Heart right ventricle (tissue), 16 donors: ENCODE measurements at regions of chr19 and their contacts with region 1.

Region 1: GRCh38 chr19:17859533-17860330 is at the start of gene RPL18A:
- DNase-seq: peak; percentile 98 to 99
- ATAC-seq: peak; percentile 96 to 99 (median 98)
- H3K4me3 ChIP-seq: peak within 1 kb of the TSS; percentile 75 to 99 (median 92)
- H3K27ac ChIP-seq: peak within 1 kb of the TSS; percentile 76 to 96 (median 90)
- H3K4me1 ChIP-seq: peaks cover 9 to 33% (median 23%) of the 10 kb centered on the region in 9 donors
- H3K27me3 ChIP-seq: no peaks in the 10 kb centered on the region
- CTCF ChIP-seq: peak; percentile 42 to 91 (median 77)
- total RNA-seq, gene RPL18A: 623 to 1,142 (median 682) TPM

Region 2: GRCh38 chr19:17448131-17448967 is 411.4 kb before region 1 on chr19 and contains the start of gene TMEM221:
- intact Hi-C with region 1: loop called in 3 of 10 experiments (anchors 5 to 10 kb)
- DNase-seq: peak; percentile 42 to 61
- ATAC-seq: peak; percentile 64 to 85 (median 76)
- H3K4me3 ChIP-seq: peak within 1 kb of the TSS in 9 of 10 donors; percentile 33 to 60 (median 49)
- H3K27ac ChIP-seq: no peak within 1 kb of the TSS
- H3K4me1 ChIP-seq: peaks cover 0 to 10% (median 7%) of the 10 kb centered on the region in 9 donors
- H3K27me3 ChIP-seq: peaks cover 0 to 36% (median 3%) of the 10 kb centered on the region in 7 donors
- CTCF ChIP-seq: peak; percentile 21 to 75 (median 63)
- total RNA-seq, gene TMEM221: 0.12 to 0.20 TPM in 2 of 10 donors, not detected in the others

Region 3: GRCh38 chr19:17703824-17704463 is 155.8 kb before region 1 on chr19:
- intact Hi-C with region 1: loop called in 8 of 10 experiments (anchors 5 to 10 kb)
- DNase-seq: peak in 1 of 2 donors; percentile 55
- ATAC-seq: peak; percentile 58 to 85 (median 74)
- H3K4me3 ChIP-seq: no peak overlapping the region
- H3K27ac ChIP-seq: no peak overlapping the region
- H3K4me1 ChIP-seq: peaks cover 0 to 3% (median 0%) of the 10 kb centered on the region in 9 donors
- H3K27me3 ChIP-seq: peaks cover 0 to 39% (median 25%) of the 10 kb centered on the region in 7 donors
- CTCF ChIP-seq: peak; percentile 61 to 95 (median 80)

Region 4: GRCh38 chr19:17932485-17933338 is 73.0 kb after region 1 on chr19 and contains the start of gene CCDC124:
- intact Hi-C with region 1: loop called (anchors 1 to 5 kb)
- DNase-seq: peak; percentile 90
- ATAC-seq: peak; percentile 95 to 99 (median 97)
- H3K4me3 ChIP-seq: peak within 1 kb of the TSS; percentile 64 to 98 (median 88)
- H3K27ac ChIP-seq: peak within 1 kb of the TSS in 9 of 10 donors; percentile 74 to 98 (median 85)
- H3K4me1 ChIP-seq: peaks cover 5 to 22% (median 20%) of the 10 kb centered on the region in 9 donors
- H3K27me3 ChIP-seq: no peaks in the 10 kb centered on the region
- CTCF ChIP-seq: peak; percentile 62 to 96 (median 81)
- total RNA-seq, gene CCDC124: 52.0 to 94.2 (median 61.6) TPM